Cardiac septum (tissue), 1 donor: ENCODE measurements at regions of chr1 and their contacts with region 1.

Region 1: DNA sequence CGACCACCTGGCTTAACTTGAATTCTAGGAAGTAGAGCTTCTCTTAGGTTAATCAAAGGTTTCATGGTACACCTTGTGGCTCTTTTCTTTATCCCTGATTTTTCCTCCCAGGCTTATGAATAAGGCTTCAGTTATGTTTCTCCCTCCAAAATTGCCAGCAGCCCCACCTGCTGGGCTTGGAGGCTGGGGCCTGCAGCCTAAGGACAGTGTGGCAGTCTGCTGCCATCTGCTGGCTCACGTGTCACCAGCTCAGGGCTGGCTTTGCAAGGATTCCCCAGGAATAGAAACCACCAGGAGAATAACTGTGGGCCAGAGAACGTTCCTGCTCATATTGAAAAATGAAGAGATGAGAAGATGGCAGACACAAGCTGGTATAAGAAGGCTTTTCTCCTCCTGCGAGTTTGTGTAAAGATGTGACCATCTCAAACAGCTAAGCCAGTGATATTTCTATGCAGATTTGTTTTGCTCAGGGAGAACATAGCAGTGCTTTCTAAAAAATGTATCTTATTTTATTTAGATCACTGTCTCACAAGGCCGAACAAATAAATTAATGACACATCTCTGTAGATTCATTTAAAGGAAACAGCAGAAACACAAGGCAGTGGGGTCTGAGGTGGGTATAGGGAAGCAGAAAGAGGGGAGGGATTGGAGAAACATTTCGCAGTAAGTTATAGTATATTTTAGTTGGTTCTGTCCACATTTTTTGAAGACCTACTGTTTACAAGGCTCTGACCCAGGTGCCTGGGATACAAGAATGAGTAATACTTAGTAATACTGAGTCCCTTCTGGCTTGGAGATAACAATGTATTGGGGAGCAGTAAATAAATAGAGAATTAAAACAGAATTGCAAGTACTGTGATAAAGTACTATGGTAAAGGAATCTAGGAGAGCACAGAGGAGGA is 291.1 kb upstream of the SGIP1 start:
- DNase-seq: peak; percentile 91

Region 2: GRCh38 chr1:65958561-65959350 is 284.1 kb before region 1 on chr1:
- intact Hi-C with region 1: loop called (anchors 1 kb)
- DNase-seq: no peak

Region 3: DNA sequence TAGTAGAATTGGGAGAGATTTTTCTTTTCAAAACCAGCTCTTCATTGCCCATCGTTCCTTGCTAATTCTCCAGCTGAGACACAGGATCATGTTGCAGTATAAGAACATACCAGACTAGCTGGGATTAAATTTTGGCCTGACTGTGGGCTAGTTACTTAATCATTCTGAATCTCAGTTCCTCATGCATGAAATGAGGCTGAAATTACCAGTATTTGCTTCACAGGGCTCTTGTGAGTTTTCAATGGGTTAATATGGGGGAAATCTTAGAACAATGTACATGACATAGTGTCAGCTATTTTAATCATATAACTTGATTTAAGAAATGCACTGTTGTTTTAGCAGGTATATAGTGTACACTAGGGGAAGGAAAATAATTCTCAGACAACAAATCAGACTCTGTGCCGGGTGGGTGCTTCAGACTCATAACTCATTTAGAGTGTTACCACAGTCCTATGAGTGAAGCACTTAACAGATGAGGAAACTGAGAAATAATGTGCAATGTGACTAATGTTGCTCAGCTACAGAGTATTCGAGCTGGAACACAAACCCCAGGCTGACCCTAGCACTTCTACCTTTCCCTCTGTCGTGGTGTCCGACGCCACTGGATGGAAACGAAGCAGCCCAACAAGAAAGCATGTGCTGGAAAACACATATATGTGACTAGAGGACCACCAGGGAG is 153.5 kb after region 1 on chr1:
- intact Hi-C with region 1: no loop called
- DNase-seq: no peak